ENCODE measurements at regions of chr5 and their contacts with region 1.

Region 1: GRCh38 chr5:179732417-179732917 is at the start of gene MAML1:
- DNase-seq: peak; percentile 100
- H3K4me3 Mint-ChIP-seq: peak within 1 kb of the TSS; percentile 96
- H3K27ac Mint-ChIP-seq: peak within 1 kb of the TSS; percentile 92
- H3K4me1 Mint-ChIP-seq: peaks cover 41% of the 10 kb centered on the region
- H3K27me3 Mint-ChIP-seq: no peaks in the 10 kb centered on the region
- total RNA-seq, gene MAML1: 20.7 TPM

Region 2: GRCh38 chr5:179550511-179551230 is 181.8 kb before region 1 on chr5 and contains the start of gene RUFY1:
- CTCF ChIA-PET with region 1: no interaction called
- intact Hi-C with region 1: loop called (anchors 1 kb)
- DNase-seq: peak; percentile 77
- H3K4me3 Mint-ChIP-seq: peak within 1 kb of the TSS; percentile 97
- H3K27ac Mint-ChIP-seq: peak within 1 kb of the TSS; percentile 98
- H3K4me1 Mint-ChIP-seq: peaks cover 33% of the 10 kb centered on the region
- H3K27me3 Mint-ChIP-seq: no peaks in the 10 kb centered on the region
- total RNA-seq, gene RUFY1: 27.8 to 31.0 TPM

Region 3: DNA sequence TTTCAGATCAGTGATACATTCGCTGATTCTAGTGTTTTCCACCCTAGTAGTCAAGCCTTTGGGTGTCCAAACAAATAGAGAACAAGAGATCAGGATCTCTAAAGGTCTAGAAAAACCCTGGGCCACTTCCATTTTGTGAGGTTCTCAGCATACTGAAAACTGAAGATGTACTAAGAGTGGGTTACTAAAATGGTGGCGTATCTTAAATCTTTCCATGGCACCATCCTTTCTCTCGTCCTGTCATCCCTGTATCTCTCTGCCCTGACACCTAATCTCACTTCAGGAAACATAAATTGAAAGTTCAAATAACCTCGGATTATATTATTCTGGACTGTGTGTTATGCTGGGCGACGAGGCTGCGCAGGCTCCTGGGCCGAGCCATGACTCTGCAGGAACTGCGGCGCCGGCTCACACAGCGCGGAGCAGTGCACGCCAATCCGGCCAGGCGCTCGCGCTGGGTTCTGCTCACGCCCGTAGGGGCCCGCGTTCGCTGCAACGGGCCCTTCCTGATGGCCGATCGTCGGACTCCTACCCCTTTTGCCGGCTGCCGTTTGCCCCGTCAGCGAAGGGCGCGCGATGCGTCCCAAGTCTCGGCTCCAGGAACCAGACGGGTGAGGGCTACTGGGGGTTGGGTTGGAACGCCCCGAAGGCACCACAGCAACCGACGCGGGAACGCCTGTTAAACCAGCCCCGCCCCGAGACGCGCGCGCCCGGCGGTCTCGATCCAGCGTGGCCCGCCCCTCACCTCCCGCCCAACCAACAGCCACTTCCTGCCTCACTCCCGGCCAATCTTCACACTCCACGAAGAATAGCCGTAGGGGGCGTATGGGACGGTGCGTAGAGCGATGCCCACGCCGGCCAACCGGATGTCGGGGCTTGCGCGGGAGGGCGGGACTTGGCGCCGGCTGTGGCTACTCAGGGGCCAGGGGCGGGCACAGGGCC is 34.2 kb before region 1 on chr5:
- CTCF ChIA-PET with region 1: interaction called, 4 read pairs
- intact Hi-C with region 1: loop called (anchors 1 kb)
- DNase-seq: peak; percentile 99
- H3K4me3 Mint-ChIP-seq: peak overlapping the region; percentile 95
- H3K27ac Mint-ChIP-seq: peak overlapping the region; percentile 97
- H3K4me1 Mint-ChIP-seq: peaks cover 37% of the 10 kb centered on the region
- H3K27me3 Mint-ChIP-seq: no peaks in the 10 kb centered on the region

Region 4: GRCh38 chr5:179795863-179796833 is 63.7 kb after region 1 on chr5:
- CTCF ChIA-PET with region 1: no interaction called
- intact Hi-C with region 1: loop called (anchors 2 kb)
- DNase-seq: peak; percentile 73
- H3K4me3 Mint-ChIP-seq: peak overlapping the region; percentile 59
- H3K27ac Mint-ChIP-seq: no peak overlapping the region
- H3K4me1 Mint-ChIP-seq: peaks cover 23% of the 10 kb centered on the region
- H3K27me3 Mint-ChIP-seq: no peaks in the 10 kb centered on the region

Region 5: DNA sequence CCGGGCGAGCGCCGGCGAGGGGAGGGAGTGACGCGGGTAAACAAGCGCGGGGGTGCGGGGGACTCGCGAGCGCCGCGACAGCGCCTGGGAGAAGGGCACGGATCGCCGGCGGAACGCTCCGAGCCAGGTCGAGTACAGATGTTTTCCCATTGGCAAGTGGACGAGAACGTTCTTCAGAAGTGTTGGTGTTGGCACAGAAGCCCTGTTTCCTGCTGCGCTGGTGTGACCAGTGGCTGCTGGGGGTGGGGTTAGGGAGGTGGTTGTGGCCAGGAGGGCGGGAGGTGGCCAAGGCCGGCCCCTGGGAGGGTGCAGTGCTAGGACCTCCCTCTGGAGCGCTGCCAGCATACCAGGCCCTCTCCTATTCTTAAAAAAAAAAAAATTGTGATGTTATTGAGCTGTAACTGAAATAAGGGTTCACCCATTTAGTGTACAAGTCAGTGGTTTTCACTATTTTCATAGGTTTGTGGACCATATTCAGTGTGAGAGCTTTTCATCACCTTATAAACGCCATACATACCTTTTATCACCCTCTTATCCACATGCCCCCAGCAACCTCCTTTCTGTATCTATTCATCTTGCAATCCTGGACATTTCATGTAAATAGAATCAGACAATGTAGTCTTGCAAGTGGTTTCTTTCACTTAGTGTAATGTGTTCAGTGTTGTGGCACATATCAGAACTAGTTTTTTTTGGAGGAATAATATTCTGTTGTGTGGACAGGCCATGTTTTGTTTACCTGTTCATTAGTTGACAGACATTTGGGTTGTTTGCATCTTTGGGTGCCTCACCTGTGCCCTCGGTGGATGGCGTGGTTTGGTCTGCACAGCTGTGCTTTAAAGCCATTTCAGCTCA is 89.3 kb after region 1 on chr5:
- CTCF ChIA-PET with region 1: no interaction called
- intact Hi-C with region 1: loop called (anchors 1 kb)
- DNase-seq: peak; percentile 92
- H3K4me3 Mint-ChIP-seq: peak overlapping the region; percentile 88
- H3K27ac Mint-ChIP-seq: peak overlapping the region; percentile 92
- H3K4me1 Mint-ChIP-seq: peaks cover 49% of the 10 kb centered on the region
- H3K27me3 Mint-ChIP-seq: peaks cover 4% of the 10 kb centered on the region

Region 6: GRCh38 chr5:179967489-179967888 is 235.0 kb after region 1 on chr5:
- CTCF ChIA-PET with region 1: no interaction called
- intact Hi-C with region 1: no loop called
- DNase-seq: no peak
- H3K4me3 Mint-ChIP-seq: no peak overlapping the region
- H3K27ac Mint-ChIP-seq: no peak overlapping the region
- H3K4me1 Mint-ChIP-seq: peaks cover 5% of the 10 kb centered on the region
- H3K27me3 Mint-ChIP-seq: no peaks in the 10 kb centered on the region

Region 7: GRCh38 chr5:180810210-180810958 is 1077.9 kb after region 1 on chr5:
- CTCF ChIA-PET with region 1: no interaction called
- intact Hi-C with region 1: loop called (anchors 10 kb)
- DNase-seq: peak; percentile 96
- H3K4me3 Mint-ChIP-seq: peak overlapping the region; percentile 98
- H3K27ac Mint-ChIP-seq: peak overlapping the region; percentile 99
- H3K4me1 Mint-ChIP-seq: peaks cover 69% of the 10 kb centered on the region
- H3K27me3 Mint-ChIP-seq: no peaks in the 10 kb centered on the region